Adrenal gland (tissue), 19 donors: ENCODE measurements at regions of chr18 and their contacts with region 1.

Region 1: GRCh38 chr18:62690236-62690815 is 25.0 kb upstream of the PHLPP1 start:
- DNase-seq: no peak
- H3K4me3 ChIP-seq: no peak overlapping the region
- H3K27ac ChIP-seq: no peak overlapping the region
- H3K4me1 ChIP-seq: peaks cover 0 to 6% of the 10 kb centered on the region in 2 donors
- H3K27me3 ChIP-seq: no peaks in the 10 kb centered on the region
- CTCF ChIP-seq: no peak
- POLR2A ChIP-seq: no peak

Region 2: GRCh38 chr18:62643181-62643580 is 47.1 kb before region 1 on chr18:
- intact Hi-C with region 1: loop called in 1 of 2 experiments (anchors 10 kb)
- DNase-seq: no peak
- H3K4me3 ChIP-seq: no peak overlapping the region
- H3K27ac ChIP-seq: no peak overlapping the region
- H3K4me1 ChIP-seq: peaks cover 0 to 8% of the 10 kb centered on the region in 2 donors
- H3K27me3 ChIP-seq: no peaks in the 10 kb centered on the region
- CTCF ChIP-seq: no peak
- POLR2A ChIP-seq: no peak